ENCODE measurements at regions of chr9 and their contacts with region 1.

Region 1: DNA sequence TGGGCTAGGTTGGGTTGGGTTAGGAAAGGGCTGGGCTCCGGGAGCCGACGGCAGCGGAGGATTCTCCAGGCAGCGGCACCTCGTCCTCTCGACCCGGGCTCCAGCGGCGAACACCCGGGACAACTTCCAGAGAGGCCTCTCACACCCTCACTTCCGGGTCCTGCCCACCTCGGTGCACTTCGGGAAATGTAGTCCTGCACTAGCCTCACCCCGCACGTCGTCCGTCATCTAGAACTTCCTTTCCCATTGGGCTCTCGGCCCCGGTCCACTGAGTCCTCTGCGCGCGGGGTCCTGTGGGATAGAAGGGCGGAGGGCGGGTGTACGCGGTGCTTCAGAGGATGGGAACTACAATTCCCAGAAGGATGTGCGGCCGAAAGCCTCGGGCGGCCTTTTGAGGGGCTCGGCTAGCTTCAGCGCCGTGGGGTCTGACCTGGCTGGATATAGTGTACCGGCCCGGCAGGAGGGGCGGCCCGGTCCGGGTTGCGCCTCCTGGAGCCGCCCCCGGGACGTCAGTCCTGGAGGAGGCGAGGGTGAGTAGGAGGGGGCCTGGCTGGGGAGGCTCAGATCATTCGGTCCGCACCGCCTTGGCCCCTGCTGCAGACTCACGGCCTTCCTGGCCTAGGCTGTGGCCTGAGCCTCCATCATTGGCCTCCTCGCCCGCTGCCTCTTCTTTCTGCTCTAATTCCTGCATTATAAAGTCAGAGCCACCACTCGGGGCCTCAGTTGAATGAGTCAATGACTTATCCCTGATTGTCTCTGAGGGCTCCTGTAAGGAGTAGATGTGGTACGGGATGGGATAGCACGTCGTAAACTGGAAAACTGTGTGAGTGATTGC is at the starts of genes ERP44 and INVS:
- DNase-seq: peak; percentile 98
- ATAC-seq: peak; percentile 99
- H3K4me3 Mint-ChIP-seq: peak within 1 kb of the TSS; percentile 100
- H3K27ac Mint-ChIP-seq: peak within 1 kb of the TSS; percentile 97
- H3K4me1 Mint-ChIP-seq: peaks cover 24% of the 10 kb centered on the region
- H3K27me3 Mint-ChIP-seq: no peaks in the 10 kb centered on the region
- total RNA-seq, gene ERP44: 12.0 to 12.4 TPM
- total RNA-seq, gene INVS: 14.1 to 19.3 TPM

Region 2: DNA sequence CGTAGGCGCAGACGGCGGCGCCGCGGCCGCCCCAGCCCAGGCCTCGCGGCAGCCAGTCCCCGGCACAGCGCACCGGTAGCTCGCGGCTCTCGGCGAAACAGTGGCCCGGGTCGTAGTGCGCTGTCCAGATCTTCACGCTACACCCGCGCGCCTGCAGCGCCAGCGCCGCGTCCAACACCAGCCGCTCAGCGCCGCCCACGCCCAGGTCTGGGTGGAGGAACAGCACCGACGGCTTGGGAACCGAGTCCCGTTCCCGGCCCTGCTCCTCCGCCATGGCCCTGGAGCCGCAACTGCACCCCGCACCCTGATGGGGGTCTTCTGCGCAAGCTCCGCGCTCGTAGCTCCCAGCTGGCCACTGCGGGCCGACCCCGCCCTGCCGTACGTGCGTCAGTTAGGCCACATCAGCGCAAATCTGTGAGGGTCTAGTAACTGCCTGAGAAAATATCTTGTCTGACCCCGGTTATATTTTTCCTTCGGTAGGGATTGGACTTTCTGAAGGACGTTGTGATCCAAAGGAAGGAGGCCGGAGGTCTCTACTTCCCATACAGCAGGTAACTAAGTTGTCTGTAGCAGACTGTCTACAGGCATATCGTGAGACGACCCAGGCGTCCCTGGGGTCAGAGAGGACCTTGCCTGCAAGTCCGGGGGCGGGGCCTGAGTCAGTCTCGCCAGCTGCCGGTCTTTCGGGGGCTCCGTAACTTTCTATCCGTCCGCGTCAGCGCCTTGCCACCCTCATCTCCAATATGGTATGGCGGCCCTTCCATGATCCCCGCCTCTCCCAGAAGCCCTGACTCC is 877.3 kb before region 1 on chr9 and contains the starts of genes ALG2 and SEC61B:
- CTCF ChIA-PET with region 1: no interaction called
- POLR2A ChIA-PET with region 1: no interaction called
- intact Hi-C with region 1: loop called in 1 of 2 experiments (anchors 1 kb)
- DNase-seq: peak; percentile 97
- ATAC-seq: peak; percentile 94
- H3K4me3 Mint-ChIP-seq: peak within 1 kb of the TSS; percentile 99
- H3K27ac Mint-ChIP-seq: peak within 1 kb of the TSS; percentile 99
- H3K4me1 Mint-ChIP-seq: peaks cover 67% of the 10 kb centered on the region
- H3K27me3 Mint-ChIP-seq: no peaks in the 10 kb centered on the region
- total RNA-seq, gene ALG2: 22.8 to 31.1 TPM
- total RNA-seq, gene SEC61B: 81.0 to 139 TPM

Region 3: GRCh38 chr9:99259231-99259918 is 839.7 kb before region 1 on chr9:
- CTCF ChIA-PET with region 1: no interaction called
- POLR2A ChIA-PET with region 1: no interaction called
- intact Hi-C with region 1: loop called in 1 of 2 experiments (anchors 10 kb)
- DNase-seq: peak; percentile 76
- ATAC-seq: peak; percentile 91
- H3K4me3 Mint-ChIP-seq: no peak overlapping the region
- H3K27ac Mint-ChIP-seq: peak overlapping the region; percentile 87
- H3K4me1 Mint-ChIP-seq: peaks cover 48% of the 10 kb centered on the region
- H3K27me3 Mint-ChIP-seq: peaks cover 5% of the 10 kb centered on the region

Region 4: GRCh38 chr9:99906403-99907207 is 192.5 kb before region 1 on chr9 and contains the start of gene STX17:
- CTCF ChIA-PET with region 1: no interaction called
- POLR2A ChIA-PET with region 1: interaction called, 5 read pairs
- intact Hi-C with region 1: loop called (anchors 1 to 2 kb)
- DNase-seq: peak; percentile 85
- ATAC-seq: peak; percentile 92
- H3K4me3 Mint-ChIP-seq: peak within 1 kb of the TSS; percentile 97
- H3K27ac Mint-ChIP-seq: peak within 1 kb of the TSS; percentile 96
- H3K4me1 Mint-ChIP-seq: peaks cover 26% of the 10 kb centered on the region
- H3K27me3 Mint-ChIP-seq: peaks cover 2% of the 10 kb centered on the region
- total RNA-seq, gene STX17: 32.8 to 35.2 TPM

Region 5: DNA sequence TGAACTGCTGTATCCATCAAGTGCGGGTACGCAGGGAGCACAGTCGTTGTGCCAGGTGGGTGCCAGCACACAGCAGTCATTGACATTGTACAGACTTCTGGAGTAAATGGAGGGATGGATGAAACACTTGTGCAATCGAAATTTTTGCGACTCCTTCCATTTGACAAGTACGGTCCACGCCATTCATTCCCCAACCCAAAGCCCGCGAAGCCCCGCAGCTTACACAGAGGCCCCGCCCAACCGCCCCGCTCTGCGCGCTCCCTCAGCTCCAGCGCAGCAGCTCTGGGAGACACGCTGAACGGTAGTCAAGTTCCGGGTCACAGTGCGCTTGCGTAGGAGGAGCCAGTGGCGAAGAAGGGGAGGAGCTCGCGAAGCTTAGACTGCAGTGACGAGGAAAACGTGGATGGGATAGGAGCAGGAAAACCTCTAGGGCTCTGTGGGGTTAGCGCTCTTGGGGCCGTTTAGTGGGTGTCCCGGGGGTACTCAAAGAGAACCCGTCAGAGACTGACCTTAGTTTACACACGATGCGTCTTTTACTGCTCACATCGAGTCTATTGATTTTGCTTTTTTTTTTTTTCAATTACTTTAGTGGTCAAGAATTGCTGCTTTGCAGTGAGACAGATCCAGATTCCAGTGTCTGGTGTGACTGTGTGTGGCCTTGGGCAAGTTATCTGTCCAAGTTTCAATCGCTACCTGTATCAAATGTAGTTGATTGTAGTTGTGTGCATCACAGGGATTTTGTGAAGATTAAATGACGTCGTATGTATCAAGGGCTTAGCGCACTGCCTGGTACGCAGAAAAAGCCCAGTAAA is 312.6 kb after region 1 on chr9:
- CTCF ChIA-PET with region 1: no interaction called
- POLR2A ChIA-PET with region 1: no interaction called
- intact Hi-C with region 1: loop called in 1 of 2 experiments (anchors 2 kb)
- DNase-seq: peak; percentile 92
- ATAC-seq: peak; percentile 100
- H3K4me3 Mint-ChIP-seq: peak overlapping the region; percentile 70
- H3K27ac Mint-ChIP-seq: peak overlapping the region; percentile 74
- H3K4me1 Mint-ChIP-seq: peaks cover 15% of the 10 kb centered on the region
- H3K27me3 Mint-ChIP-seq: peaks cover 14% of the 10 kb centered on the region

Region 6: GRCh38 chr9:100426530-100427428 is 327.7 kb after region 1 on chr9 and contains the start of gene MSANTD3:
- CTCF ChIA-PET with region 1: no interaction called
- POLR2A ChIA-PET with region 1: no interaction called
- intact Hi-C with region 1: loop called in 1 of 2 experiments (anchors 5 kb)
- DNase-seq: peak; percentile 71
- ATAC-seq: peak; percentile 74
- H3K4me3 Mint-ChIP-seq: peak within 1 kb of the TSS; percentile 81
- H3K27ac Mint-ChIP-seq: peak within 1 kb of the TSS; percentile 91
- H3K4me1 Mint-ChIP-seq: peaks cover 30% of the 10 kb centered on the region
- H3K27me3 Mint-ChIP-seq: no peaks in the 10 kb centered on the region
- total RNA-seq, gene MSANTD3: 17.9 to 21.6 TPM

Region 7: GRCh38 chr9:101398068-101398929 is 1299.2 kb after region 1 on chr9 and contains the starts of genes MRPL50 and ZNF189:
- CTCF ChIA-PET with region 1: no interaction called
- POLR2A ChIA-PET with region 1: no interaction called
- intact Hi-C with region 1: loop called (anchors 1 to 5 kb)
- DNase-seq: peak; percentile 98
- ATAC-seq: peak; percentile 97
- H3K4me3 Mint-ChIP-seq: peak within 1 kb of the TSS; percentile 94
- H3K27ac Mint-ChIP-seq: peak within 1 kb of the TSS; percentile 100
- H3K4me1 Mint-ChIP-seq: peaks cover 67% of the 10 kb centered on the region
- H3K27me3 Mint-ChIP-seq: no peaks in the 10 kb centered on the region
- total RNA-seq, gene MRPL50: 15.5 to 17.0 TPM
- total RNA-seq, gene ZNF189: 10.2 to 13.1 TPM